Posterior vena cava (tissue), 2 donors: ENCODE measurements at regions of chr3 and their contacts with region 1.

Region 1: GRCh38 chr3:47333907-47334306 is 46.9 kb upstream of the PTPN23 start:
- DNase-seq: no peak

Region 2: GRCh38 chr3:46349485-46350261 is 984.2 kb before region 1 on chr3:
- intact Hi-C with region 1: loop called in 1 of 2 experiments (anchors 5 kb)
- DNase-seq: no peak